Transverse colon (tissue), 4 donors: ENCODE measurements at regions of chr1 and their contacts with region 1.

Region 1: GRCh38 chr1:58783993-58784757 is at the start of gene JUN:
- DNase-seq: peak; percentile 100
- H3K4me3 ChIP-seq: peak within 1 kb of the TSS; percentile 72 to 92 (median 84)
- H3K27ac ChIP-seq: peak within 1 kb of the TSS; percentile 99 to 100 (median 99)
- H3K4me1 ChIP-seq: peaks cover under 1 to 25% (median 15%) of the 10 kb centered on the region in 4 donors
- H3K27me3 ChIP-seq: no peaks in the 10 kb centered on the region
- CTCF ChIP-seq: no peak
- EP300 ChIP-seq: peak; percentile 57
- POLR2A ChIP-seq: peak; percentile 100
- total RNA-seq, gene JUN: 315 to 440 (median 376) TPM

Region 2: DNA sequence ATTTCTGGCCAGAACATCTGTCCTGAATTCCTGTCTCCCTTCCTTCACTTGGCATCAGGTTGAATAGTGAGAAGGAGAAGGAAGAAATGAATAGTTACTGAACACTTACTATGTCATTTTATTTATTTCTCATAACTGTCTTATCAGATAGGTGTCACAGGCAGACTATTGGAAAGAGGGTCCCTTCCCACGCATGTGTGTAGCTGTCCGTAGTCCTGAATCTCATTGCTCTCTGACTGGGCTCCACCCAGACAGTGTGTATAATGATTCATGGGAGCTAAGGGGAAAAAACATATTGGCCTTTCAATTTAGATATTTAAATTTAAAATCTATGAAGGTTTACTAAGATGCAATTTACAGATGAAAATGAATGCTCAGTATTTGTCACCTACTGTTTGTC is 323.7 kb before region 1 on chr1:
- in situ Hi-C with region 1: no loop called
- intact Hi-C with region 1: no loop called
- DNase-seq: no peak
- H3K4me3 ChIP-seq: no peak overlapping the region
- H3K27ac ChIP-seq: no peak overlapping the region
- H3K4me1 ChIP-seq: no peaks in the 10 kb centered on the region
- H3K27me3 ChIP-seq: no peaks in the 10 kb centered on the region
- CTCF ChIP-seq: no peak
- EP300 ChIP-seq: no peak
- POLR2A ChIP-seq: no peak

Region 3: GRCh38 chr1:58816072-58816746 is 32.0 kb after region 1 on chr1:
- in situ Hi-C with region 1: no loop called
- intact Hi-C with region 1: loop called (anchors 1 kb)
- DNase-seq: peak; percentile 96
- H3K4me3 ChIP-seq: peak overlapping the region; percentile 45 to 69 (median 53)
- H3K27ac ChIP-seq: peak overlapping the region; percentile 93 to 96 (median 94)
- H3K4me1 ChIP-seq: peaks cover 5 to 43% (median 20%) of the 10 kb centered on the region in 4 donors
- H3K27me3 ChIP-seq: no peaks in the 10 kb centered on the region
- CTCF ChIP-seq: peak in 1 of 5 experiments; percentile 8
- EP300 ChIP-seq: peak; percentile 49
- POLR2A ChIP-seq: peak; percentile 62

Region 4: DNA sequence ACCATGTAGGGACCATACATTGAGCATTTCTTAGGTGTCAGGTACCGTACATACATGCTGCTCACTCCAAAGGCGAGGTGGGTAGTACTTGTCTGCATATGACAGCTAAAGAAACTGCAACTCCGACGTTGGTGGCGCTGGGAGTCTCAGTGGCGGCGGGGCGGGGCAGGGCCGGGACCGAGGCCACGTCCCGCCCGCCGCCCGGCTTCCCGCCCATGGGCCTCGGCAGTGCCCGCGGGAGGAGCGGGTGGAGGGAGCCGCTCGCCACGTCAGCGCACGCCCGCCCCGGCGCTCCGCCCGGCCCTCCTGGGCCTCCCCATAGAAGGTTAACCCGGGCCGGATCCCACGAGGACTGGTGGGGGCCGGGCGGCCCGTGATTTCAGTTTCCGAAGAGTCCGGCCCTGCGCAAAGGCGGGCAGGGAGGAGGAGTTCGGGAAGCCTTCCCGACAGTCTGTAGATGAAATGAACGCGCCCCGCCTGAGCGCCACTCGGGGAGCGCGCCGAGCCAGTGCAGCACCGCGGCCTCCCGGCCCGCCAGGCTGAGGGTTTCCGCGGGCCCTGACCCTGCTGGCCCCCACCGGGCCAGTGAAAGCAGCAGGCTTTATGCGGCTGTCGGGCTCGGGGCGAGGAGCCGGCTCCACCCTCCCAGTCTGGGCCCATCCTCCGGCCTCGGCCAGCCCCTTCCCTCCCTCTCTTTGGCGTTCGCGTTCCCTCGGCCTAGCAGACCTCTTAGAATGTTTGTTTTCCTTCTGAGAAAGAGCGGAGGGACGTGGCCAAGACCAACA is 119.5 kb after region 1 on chr1:
- in situ Hi-C with region 1: loop called in 1 of 4 experiments (anchors 10 kb)
- intact Hi-C with region 1: no loop called
- DNase-seq: peak; percentile 94
- H3K4me3 ChIP-seq: peak overlapping the region; percentile 23 to 58 (median 39)
- H3K27ac ChIP-seq: peak overlapping the region; percentile 95 to 96 (median 96)
- H3K4me1 ChIP-seq: peaks cover 16 to 51% (median 32%) of the 10 kb centered on the region in 4 donors
- H3K27me3 ChIP-seq: no peaks in the 10 kb centered on the region
- CTCF ChIP-seq: no peak
- EP300 ChIP-seq: peak; percentile 38
- POLR2A ChIP-seq: peak; percentile 96

Region 5: GRCh38 chr1:59076612-59077011 is 292.4 kb after region 1 on chr1:
- in situ Hi-C with region 1: loop called in 1 of 4 experiments (anchors 25 kb)
- intact Hi-C with region 1: loop called (anchors 10 kb)
- DNase-seq: no peak
- H3K4me3 ChIP-seq: no peak overlapping the region
- H3K27ac ChIP-seq: no peak overlapping the region
- H3K4me1 ChIP-seq: peaks cover 0 to 15% (median 2%) of the 10 kb centered on the region in 4 donors
- H3K27me3 ChIP-seq: no peaks in the 10 kb centered on the region
- CTCF ChIP-seq: peak; percentile 22 to 55 (median 30)
- EP300 ChIP-seq: no peak
- POLR2A ChIP-seq: no peak

Region 6: DNA sequence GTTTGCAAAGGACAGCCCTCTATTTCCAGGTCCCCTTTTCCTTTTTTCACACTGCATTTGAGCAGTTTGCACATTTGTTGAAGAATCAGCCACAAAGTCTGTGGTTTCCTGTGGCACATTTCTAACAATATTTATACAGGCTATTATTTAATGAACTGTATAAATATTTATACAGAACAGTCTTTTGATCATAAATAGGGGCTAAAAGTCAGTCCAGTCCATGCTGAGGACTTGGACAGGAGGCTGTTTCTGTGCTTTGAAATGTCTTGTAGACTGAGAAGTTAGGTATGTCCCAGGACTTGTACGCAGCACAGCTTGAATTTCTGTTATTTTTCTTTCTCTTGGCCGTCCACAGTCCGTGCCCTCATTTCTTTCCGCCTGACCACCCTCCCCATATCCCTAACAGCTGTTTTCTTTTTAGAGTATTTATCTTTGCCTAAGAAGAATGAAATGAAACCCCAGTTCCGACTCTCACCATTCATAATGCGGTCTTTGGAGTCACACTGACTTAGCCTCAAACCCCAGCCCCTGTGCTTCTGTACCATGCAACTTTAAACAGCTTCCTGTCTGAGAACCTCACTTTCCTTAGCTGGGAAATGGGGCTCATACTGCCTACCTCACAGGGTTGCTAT is 532.4 kb after region 1 on chr1:
- in situ Hi-C with region 1: loop called in 1 of 4 experiments (anchors 25 kb)
- intact Hi-C with region 1: no loop called
- DNase-seq: no peak
- H3K4me3 ChIP-seq: peak overlapping the region in 1 of 4 donors; percentile 16
- H3K27ac ChIP-seq: peak overlapping the region; percentile 30 to 61 (median 58)
- H3K4me1 ChIP-seq: peaks cover 4 to 34% (median 11%) of the 10 kb centered on the region in 4 donors
- H3K27me3 ChIP-seq: no peaks in the 10 kb centered on the region
- CTCF ChIP-seq: no peak
- EP300 ChIP-seq: no peak
- POLR2A ChIP-seq: no peak

Region 7: DNA sequence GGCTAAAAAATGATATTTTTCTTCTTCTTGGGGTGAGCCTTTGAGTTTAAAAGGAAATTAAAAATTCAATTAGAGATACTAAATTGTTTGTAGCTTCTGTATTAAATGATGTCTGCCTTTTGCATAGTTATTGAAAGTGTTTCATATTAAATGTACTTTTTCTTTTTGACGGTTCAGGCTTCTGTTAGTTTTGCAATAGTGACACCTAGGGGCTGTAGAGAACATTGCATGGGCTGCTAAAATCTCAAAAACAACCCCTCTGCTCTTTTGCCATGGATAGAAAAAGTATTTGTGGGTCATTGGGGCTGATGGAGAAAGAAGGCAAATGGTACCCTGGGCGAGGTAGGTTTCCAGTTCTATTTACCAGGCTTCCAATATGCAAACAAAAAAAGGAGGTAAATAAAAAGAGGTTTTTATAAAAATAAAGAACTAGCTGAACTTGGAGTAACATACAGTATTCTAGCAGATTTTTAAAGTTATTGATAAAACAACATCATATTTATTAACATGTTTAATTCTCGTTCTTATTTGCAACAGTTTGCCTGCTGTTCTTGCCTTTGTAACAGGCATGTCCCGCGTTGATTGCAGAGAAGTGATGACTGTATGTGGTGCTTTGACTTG is 915.2 kb after region 1 on chr1:
- in situ Hi-C with region 1: no loop called
- intact Hi-C with region 1: loop called (anchors 10 kb)
- DNase-seq: no peak
- H3K4me3 ChIP-seq: no peak overlapping the region
- H3K27ac ChIP-seq: peak overlapping the region in 3 of 4 donors; percentile 21 to 47 (median 38)
- H3K4me1 ChIP-seq: peaks cover 5 to 36% (median 8%) of the 10 kb centered on the region in 4 donors
- H3K27me3 ChIP-seq: no peaks in the 10 kb centered on the region
- CTCF ChIP-seq: peak; percentile 91 to 98 (median 96)
- EP300 ChIP-seq: no peak
- POLR2A ChIP-seq: no peak